GM10248 (cell line): ENCODE measurements at regions of chr6 and their contacts with region 1.

Region 1: GRCh38 chr6:167020206-167020605 is 21.0 kb downstream of the CEP43 start:
- DNase-seq: peak; percentile 60
- CTCF ChIP-seq: no peak

Region 2: GRCh38 chr6:168252267-168252666 is 1232.1 kb after region 1 on chr6:
- CTCF ChIA-PET with region 1: no interaction called
- POLR2A ChIA-PET with region 1: interaction called, 11 read pairs
- DNase-seq: no peak
- CTCF ChIP-seq: no peak